ENCODE measurements at regions of chr9 and their contacts with region 1.

Region 1: GRCh38 chr9:20811872-20812271 is 127.8 kb downstream of the FOCAD start:
- DNase-seq: no peak
- ATAC-seq: no peak
- H3K4me3 ChIP-seq: no peak overlapping the region
- H3K27ac ChIP-seq: no peak overlapping the region
- H3K4me1 ChIP-seq: peaks cover 0 to 22% (median 10%) of the 10 kb centered on the region in 9 donors
- H3K27me3 ChIP-seq: no peaks in the 10 kb centered on the region
- CTCF ChIP-seq: no peak

Region 2: GRCh38 chr9:20848490-20848889 is 36.6 kb after region 1 on chr9:
- intact Hi-C with region 1: loop called in 2 of 10 experiments (anchors 5 to 10 kb)
- DNase-seq: no peak
- ATAC-seq: no peak
- H3K4me3 ChIP-seq: no peak overlapping the region
- H3K27ac ChIP-seq: no peak overlapping the region
- H3K4me1 ChIP-seq: no peaks in the 10 kb centered on the region
- H3K27me3 ChIP-seq: no peaks in the 10 kb centered on the region
- CTCF ChIP-seq: no peak

Region 3: DNA sequence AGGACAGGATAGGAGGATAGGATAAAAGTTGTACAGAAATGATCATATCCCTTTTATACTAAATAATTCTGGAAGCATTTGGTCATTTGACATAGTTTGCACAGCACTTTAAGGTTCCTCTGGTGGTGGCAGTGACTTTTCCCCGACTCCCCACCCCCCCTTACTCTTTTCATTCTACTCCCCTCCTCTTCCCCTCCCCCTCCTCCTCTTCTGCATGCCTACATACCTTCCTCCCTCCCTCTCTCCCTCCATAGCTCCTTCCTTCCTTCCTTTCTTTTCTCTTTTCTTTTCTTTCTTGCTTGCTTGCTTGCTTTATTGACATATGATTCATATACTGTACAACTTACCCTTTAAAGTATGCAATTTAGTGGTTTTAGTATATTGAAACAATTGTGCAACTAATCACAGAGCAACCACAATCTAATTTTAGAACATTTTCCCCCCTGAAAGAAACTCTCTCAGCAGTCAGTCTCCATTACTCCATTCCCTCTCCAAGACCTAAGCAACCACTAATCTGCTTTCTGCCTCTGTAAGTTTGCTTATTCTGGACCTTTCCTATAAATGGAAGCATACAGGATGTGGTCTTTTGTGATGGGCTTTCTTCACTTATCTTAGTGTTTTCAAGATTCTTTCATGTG is 60.6 kb after region 1 on chr9:
- intact Hi-C with region 1: loop called in 1 of 10 experiments (anchors 10 kb)
- DNase-seq: no peak
- ATAC-seq: no peak
- H3K4me3 ChIP-seq: no peak overlapping the region
- H3K27ac ChIP-seq: no peak overlapping the region
- H3K4me1 ChIP-seq: peaks cover 0 to 11% (median 0%) of the 10 kb centered on the region in 9 donors
- H3K27me3 ChIP-seq: no peaks in the 10 kb centered on the region
- CTCF ChIP-seq: no peak